Ovary (tissue), 10 donors: ENCODE measurements at regions of chr13 and their contacts with region 1.

Region 1: GRCh38 chr13:108155185-108156106 is 59.9 kb downstream of the LIG4 start:
- DNase-seq: peak in 4 of 5 donors; percentile 35 to 43 (median 38)
- H3K4me3 ChIP-seq: no peak overlapping the region
- H3K27ac ChIP-seq: no peak overlapping the region
- H3K4me1 ChIP-seq: no peaks in the 10 kb centered on the region
- H3K27me3 ChIP-seq: no peaks in the 10 kb centered on the region
- CTCF ChIP-seq: peak; percentile 23 to 41 (median 31)
- EP300 ChIP-seq: no peak
- POLR2A ChIP-seq: no peak

Region 2: GRCh38 chr13:107205303-107206104 is 949.9 kb before region 1 on chr13:
- intact Hi-C with region 1: loop called in 2 of 4 experiments (anchors 10 kb)
- DNase-seq: peak in 4 of 5 donors; percentile 56 to 66 (median 59)
- H3K4me3 ChIP-seq: no peak overlapping the region
- H3K27ac ChIP-seq: no peak overlapping the region
- H3K4me1 ChIP-seq: peaks cover 2% of the 10 kb centered on the region
- H3K27me3 ChIP-seq: no peaks in the 10 kb centered on the region
- CTCF ChIP-seq: peak; percentile 42 to 73 (median 50)
- EP300 ChIP-seq: no peak
- POLR2A ChIP-seq: no peak

Region 3: GRCh38 chr13:107211073-107211472 is 944.4 kb before region 1 on chr13:
- intact Hi-C with region 1: loop called in 2 of 4 experiments (anchors 10 kb)
- DNase-seq: peak; percentile 37 to 73 (median 69)
- H3K4me3 ChIP-seq: no peak overlapping the region
- H3K27ac ChIP-seq: no peak overlapping the region
- H3K4me1 ChIP-seq: peaks cover 3% of the 10 kb centered on the region
- H3K27me3 ChIP-seq: no peaks in the 10 kb centered on the region
- CTCF ChIP-seq: peak; percentile 45 to 65 (median 52)
- EP300 ChIP-seq: no peak
- POLR2A ChIP-seq: no peak

Region 4: DNA sequence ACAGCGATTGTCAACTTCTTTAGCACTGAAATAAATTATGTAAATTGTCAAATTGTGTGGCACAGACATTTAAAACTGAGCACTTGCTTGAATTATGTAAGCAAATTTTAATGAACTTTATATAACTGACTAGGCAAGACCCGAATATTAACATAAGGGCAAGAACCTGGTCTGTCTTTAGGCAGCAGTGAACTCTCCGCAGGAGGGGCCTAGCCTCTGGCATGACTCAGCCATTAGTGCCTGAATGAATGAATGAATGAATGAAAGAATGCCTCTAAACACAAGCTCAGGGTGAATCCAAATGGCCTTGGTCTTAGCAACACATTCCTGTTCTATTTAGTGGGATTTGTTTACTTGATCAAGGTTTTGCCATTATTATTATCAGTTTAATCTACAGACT is 932.8 kb before region 1 on chr13:
- intact Hi-C with region 1: loop called in 2 of 4 experiments (anchors 5 to 10 kb)
- DNase-seq: no peak
- H3K4me3 ChIP-seq: no peak overlapping the region
- H3K27ac ChIP-seq: no peak overlapping the region
- H3K4me1 ChIP-seq: no peaks in the 10 kb centered on the region
- H3K27me3 ChIP-seq: no peaks in the 10 kb centered on the region
- CTCF ChIP-seq: no peak
- EP300 ChIP-seq: no peak
- POLR2A ChIP-seq: no peak

Region 5: GRCh38 chr13:108816381-108816780 is 660.9 kb after region 1 on chr13:
- intact Hi-C with region 1: no loop called
- DNase-seq: no peak
- H3K4me3 ChIP-seq: no peak overlapping the region
- H3K27ac ChIP-seq: no peak overlapping the region
- H3K4me1 ChIP-seq: no peaks in the 10 kb centered on the region
- H3K27me3 ChIP-seq: no peaks in the 10 kb centered on the region
- CTCF ChIP-seq: no peak
- EP300 ChIP-seq: no peak
- POLR2A ChIP-seq: no peak